GM12878 (cell line): ENCODE measurements at regions of chr15 and their contacts with region 1.

Region 1: DNA sequence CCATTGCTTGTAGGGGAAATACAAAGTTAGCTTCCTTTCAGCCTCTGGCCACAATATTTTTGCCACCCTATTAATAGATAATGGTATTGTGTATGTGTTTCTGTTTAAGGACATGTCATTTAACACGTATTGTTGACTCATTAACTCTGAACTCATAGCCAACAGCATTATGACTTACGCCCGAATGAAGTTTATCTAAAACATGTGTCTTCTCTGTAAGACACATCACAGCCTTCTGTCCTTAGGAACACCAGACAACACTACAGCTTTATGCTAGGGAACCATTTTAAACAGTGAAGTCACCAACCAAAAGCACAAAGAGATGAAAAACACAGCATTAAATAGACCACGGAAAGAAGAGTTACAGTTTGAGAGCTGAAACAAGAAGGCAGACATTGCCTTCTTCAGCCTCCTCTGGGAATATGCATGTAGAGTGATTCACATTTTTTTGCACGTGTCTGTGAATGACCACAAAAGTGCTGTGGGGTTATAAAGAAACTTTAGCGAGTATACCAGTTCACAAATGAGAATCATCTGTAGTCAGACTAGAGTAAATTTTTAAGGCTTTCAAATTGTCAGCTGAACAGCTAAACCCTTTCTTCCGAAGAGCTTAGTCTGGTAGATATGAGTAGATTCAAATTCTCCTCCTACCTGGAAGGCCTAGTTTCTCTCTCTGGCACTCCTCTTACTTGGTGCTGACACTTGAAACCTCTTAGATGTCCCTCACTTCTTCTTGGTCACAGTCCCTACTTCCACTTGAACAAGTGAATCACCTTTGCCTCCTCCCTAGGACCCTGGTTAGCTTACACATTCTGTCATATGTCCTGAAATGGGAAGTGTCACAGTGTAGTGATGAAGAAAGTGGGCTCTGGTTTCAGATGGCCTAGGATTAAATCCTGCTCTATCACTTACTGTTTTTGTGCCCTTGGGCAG is 32.2 kb downstream of the MCTP2 start:
- DNase-seq: peak; percentile 73
- ATAC-seq: peak; percentile 78
- H3K4me3 ChIP-seq: no peak overlapping the region
- H3K27ac ChIP-seq: no peak overlapping the region
- H3K4me1 ChIP-seq: peaks cover 2% of the 10 kb centered on the region; the same call in 1 of the 2 replicates
- H3K27me3 ChIP-seq: no peaks in the 10 kb centered on the region
- CTCF ChIP-seq: no peak
- EP300 ChIP-seq: peak; percentile 45 to 55; a peak in 2 of 4 replicates
- POLR2A ChIP-seq: no peak
- RAD21 ChIP-seq: no peak

Region 2: DNA sequence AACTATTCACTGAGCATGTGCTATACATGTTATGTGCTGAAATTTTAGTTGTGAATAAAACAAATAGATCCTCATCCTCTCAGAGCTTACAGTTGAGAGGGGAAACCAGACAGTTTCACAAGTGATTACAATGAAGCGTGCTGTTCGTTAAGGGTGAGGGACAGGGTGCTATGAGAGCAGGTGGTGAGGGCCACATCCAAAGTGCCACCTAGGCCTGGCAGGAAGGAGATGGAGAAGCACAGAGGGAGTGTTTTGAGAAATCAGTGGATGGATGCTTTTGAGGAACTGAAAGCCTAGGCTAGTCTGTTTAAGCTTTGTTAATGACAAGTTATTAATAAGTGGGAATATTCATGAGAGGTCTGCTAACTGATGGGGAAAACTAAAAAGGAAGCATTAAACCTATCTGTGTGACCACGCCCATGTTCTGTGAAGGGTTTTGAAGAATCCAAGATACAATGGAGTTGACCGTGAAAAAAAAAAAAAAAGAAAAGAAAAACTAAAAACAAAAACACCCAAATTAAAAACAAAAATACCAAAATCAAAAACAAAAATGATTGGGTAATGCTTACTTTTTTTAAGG is 25.0 kb before region 1 on chr15:
- CTCF ChIA-PET with region 1: interaction called, 4 read pairs
- POLR2A ChIA-PET with region 1: interaction called, 6 read pairs
- RAD21 ChIA-PET with region 1: interaction called, 52 read pairs
- SMC1A ChIA-PET with region 1: interaction called, 57 read pairs
- in situ Hi-C with region 1: no loop called
- intact Hi-C with region 1: no loop called
- DNase-seq: no peak
- ATAC-seq: peak; percentile 85
- H3K4me3 ChIP-seq: no peak overlapping the region
- H3K27ac ChIP-seq: no peak overlapping the region
- H3K4me1 ChIP-seq: 0 out of 2 replicates have a peak, but pooled peaks cover 5% of the 10 kb centered on the region
- H3K27me3 ChIP-seq: no peaks in the 10 kb centered on the region
- CTCF ChIP-seq: no peak
- EP300 ChIP-seq: peak in 1 of 2 experiments; percentile 25; a peak in 1 of 4 replicates
- POLR2A ChIP-seq: no peak
- RAD21 ChIP-seq: no peak

Region 3: DNA sequence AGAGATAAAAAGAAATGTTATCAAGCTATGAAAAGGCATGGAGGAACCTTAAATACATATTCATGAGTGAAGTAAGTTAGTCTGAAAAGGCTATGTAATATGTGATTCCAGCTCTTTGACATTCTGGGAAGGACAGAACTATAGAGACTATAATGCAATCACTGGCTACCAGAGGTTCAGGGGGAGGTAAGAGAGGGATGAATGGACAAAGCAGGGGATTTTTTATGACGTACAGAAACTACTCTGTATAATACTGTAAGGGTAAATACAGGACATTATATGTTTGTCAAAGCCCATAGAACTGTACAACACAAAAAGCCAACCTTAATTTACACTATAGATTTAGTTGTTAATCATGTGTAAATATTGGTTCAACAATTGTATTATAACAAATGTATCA is 13.9 kb after region 1 on chr15:
- CTCF ChIA-PET with region 1: interaction called, 3 read pairs
- POLR2A ChIA-PET with region 1: interaction called, 13 read pairs
- RAD21 ChIA-PET with region 1: interaction called, 7 read pairs
- SMC1A ChIA-PET with region 1: interaction called, 6 read pairs
- in situ Hi-C with region 1: no loop called
- intact Hi-C with region 1: no loop called
- DNase-seq: no peak
- ATAC-seq: peak; percentile 78
- H3K4me3 ChIP-seq: no peak overlapping the region
- H3K27ac ChIP-seq: no peak overlapping the region
- H3K4me1 ChIP-seq: no peaks in the 10 kb centered on the region
- H3K27me3 ChIP-seq: no peaks in the 10 kb centered on the region
- CTCF ChIP-seq: no peak
- EP300 ChIP-seq: no peak; a peak in 1 of 4 replicates
- POLR2A ChIP-seq: no peak
- RAD21 ChIP-seq: no peak